Calu3 (cell line): ENCODE measurements at regions of chr5 and their contacts with region 1.

Region 1: DNA sequence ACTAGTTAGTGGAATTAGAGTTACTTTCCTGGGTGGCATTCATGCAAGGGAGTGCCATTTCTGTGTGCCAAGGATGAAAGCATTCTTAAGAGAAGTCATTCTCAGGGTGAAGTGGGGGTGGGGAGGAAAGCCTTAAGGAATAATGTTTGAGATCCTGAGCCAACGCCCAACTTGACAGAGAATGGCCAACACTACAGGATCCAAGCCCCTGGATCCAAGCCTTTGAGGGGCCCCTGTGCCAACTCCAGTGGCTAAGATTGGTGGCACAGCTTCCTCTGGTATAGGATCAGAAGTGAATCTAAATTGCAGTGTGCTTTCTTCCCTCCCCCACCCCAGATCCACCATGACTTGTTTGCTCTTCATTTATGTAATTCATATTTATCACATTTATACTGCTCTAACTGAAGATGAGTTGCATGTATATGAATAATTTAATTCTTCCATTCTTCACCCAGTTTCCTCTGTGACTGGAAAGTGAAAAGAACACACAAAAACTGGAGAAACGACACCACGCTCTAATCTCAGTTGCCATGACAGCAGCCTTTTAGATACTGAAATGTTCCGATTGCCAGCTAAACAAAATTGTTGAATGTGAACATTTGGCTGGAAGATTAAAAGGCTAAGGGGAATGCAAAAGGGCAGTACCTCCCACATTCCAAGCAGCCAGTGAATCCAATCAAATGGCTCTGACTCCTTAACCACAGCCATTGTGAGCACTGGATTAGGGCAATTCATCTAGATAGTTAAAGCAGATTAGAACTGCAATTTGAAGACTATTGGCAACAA is 4.5 kb downstream of the ZNF608 start:
- DNase-seq: peak; percentile 65
- H3K4me3 Mint-ChIP-seq: no peak overlapping the region
- H3K27ac Mint-ChIP-seq: no peak overlapping the region
- H3K4me1 Mint-ChIP-seq: peaks cover 27% of the 10 kb centered on the region
- H3K27me3 Mint-ChIP-seq: no peaks in the 10 kb centered on the region
- CTCF ChIP-seq: no peak

Region 2: GRCh38 chr5:123937230-123937629 is 804.7 kb before region 1 on chr5:
- CTCF ChIA-PET with region 1: no interaction called
- intact Hi-C with region 1: loop called (anchors 5 kb)
- DNase-seq: peak; percentile 51
- H3K4me3 Mint-ChIP-seq: no peak overlapping the region
- H3K27ac Mint-ChIP-seq: no peak overlapping the region
- H3K4me1 Mint-ChIP-seq: no peaks in the 10 kb centered on the region
- H3K27me3 Mint-ChIP-seq: no peaks in the 10 kb centered on the region
- CTCF ChIP-seq: peak; percentile 36

Region 3: DNA sequence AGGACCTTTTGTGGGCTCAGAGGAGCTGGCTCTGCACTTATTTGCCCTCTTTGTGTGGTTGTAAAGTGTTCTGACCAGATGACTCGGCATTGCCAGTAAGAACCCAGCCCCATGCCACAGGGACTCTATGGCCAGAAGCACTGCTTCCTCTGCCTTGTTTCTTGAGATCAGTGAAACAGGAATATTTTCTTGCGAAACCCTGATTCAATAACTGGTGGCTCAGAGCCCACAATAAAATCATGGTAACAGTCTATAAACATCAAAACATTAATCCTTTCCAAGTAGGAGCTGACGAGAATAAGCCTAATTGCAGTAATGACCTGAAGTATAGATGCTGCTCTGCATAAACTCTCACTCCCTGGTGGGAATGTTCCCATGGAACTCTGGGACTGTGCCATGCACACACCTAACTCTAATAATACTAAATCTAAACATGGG is 339.7 kb before region 1 on chr5:
- CTCF ChIA-PET with region 1: no interaction called
- intact Hi-C with region 1: loop called (anchors 5 kb)
- DNase-seq: peak; percentile 58
- H3K4me3 Mint-ChIP-seq: no peak overlapping the region
- H3K27ac Mint-ChIP-seq: peak overlapping the region; percentile 74
- H3K4me1 Mint-ChIP-seq: peaks cover 27% of the 10 kb centered on the region
- H3K27me3 Mint-ChIP-seq: no peaks in the 10 kb centered on the region
- CTCF ChIP-seq: no peak

Region 4: GRCh38 chr5:124790895-124791732 is 49.2 kb after region 1 on chr5:
- CTCF ChIA-PET with region 1: no interaction called
- intact Hi-C with region 1: no loop called
- DNase-seq: no peak
- H3K4me3 Mint-ChIP-seq: no peak overlapping the region
- H3K27ac Mint-ChIP-seq: peak overlapping the region; percentile 80
- H3K4me1 Mint-ChIP-seq: peaks cover 32% of the 10 kb centered on the region
- H3K27me3 Mint-ChIP-seq: no peaks in the 10 kb centered on the region
- CTCF ChIP-seq: no peak

Region 5: GRCh38 chr5:124906339-124907097 is 164.6 kb after region 1 on chr5:
- CTCF ChIA-PET with region 1: no interaction called
- intact Hi-C with region 1: loop called (anchors 5 kb)
- DNase-seq: peak; percentile 13
- H3K4me3 Mint-ChIP-seq: no peak overlapping the region
- H3K27ac Mint-ChIP-seq: peak overlapping the region; percentile 17
- H3K4me1 Mint-ChIP-seq: peaks cover 46% of the 10 kb centered on the region
- H3K27me3 Mint-ChIP-seq: no peaks in the 10 kb centered on the region
- CTCF ChIP-seq: no peak